Activated B cell treated with CpG ODN at 0.5 μM for 24 hours (primary cell): ENCODE measurements at regions of chrX and their contacts with region 1.

Region 1: GRCh38 chrX:43557792-43558191 is 98.3 kb upstream of the MAOA start:
- DNase-seq: peak; percentile 18
- ATAC-seq: peak; percentile 42
- H3K4me3 Mint-ChIP-seq: no peak overlapping the region
- H3K27ac Mint-ChIP-seq: no peak overlapping the region
- H3K4me1 Mint-ChIP-seq: peaks cover 13% of the 10 kb centered on the region
- H3K27me3 Mint-ChIP-seq: no peaks in the 10 kb centered on the region
- CTCF ChIP-seq: no peak

Region 2: DNA sequence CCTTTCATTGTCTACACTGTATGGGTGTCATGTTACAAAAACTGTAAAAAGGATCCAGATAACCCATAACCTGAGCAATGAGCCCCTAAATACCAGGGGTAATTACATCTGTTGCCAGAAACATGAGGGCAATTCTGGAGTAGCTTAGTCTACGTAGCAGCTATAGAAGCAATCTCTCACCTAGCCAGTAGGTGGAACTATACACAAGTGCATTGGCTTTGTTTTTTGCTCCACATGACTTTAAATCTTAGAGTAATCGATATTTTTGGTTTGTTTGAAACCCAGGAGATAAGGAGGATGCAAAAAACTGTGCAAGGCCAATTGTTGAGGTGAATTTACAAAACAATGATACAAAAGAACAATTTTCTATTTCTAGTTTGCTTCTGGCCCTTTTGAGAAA is 1776.3 kb before region 1 on chrX:
- CTCF ChIA-PET with region 1: interaction called, 21 read pairs
- POLR2A ChIA-PET with region 1: no interaction called
- intact Hi-C with region 1: loop called (anchors 1 kb)
- DNase-seq: no peak
- ATAC-seq: peak; percentile 21
- H3K4me3 Mint-ChIP-seq: no peak overlapping the region
- H3K27ac Mint-ChIP-seq: no peak overlapping the region
- H3K4me1 Mint-ChIP-seq: peaks cover 9% of the 10 kb centered on the region
- H3K27me3 Mint-ChIP-seq: no peaks in the 10 kb centered on the region
- CTCF ChIP-seq: peak; percentile 55

Region 3: DNA sequence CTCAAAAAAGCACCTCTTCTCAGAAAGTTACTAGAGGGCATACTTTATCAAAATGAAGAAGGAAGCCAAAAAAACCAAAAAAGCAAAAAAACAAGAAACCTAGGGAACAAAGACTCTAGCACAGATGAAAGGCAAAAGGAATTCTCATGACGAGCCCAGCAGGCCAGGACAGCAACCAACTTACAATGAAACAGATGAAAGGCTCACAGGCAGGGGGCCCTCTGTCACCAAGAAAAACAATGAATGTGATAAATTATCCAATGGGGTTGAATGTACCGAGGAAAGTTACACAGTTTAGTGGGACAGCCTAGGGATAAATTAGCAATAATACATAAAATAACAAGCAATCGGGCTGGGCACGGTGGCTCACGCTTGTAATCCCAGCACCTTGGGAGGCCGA is 1754.8 kb before region 1 on chrX:
- CTCF ChIA-PET with region 1: interaction called, 35 read pairs
- POLR2A ChIA-PET with region 1: no interaction called
- intact Hi-C with region 1: loop called (anchors 1 kb)
- DNase-seq: no peak
- ATAC-seq: no peak
- H3K4me3 Mint-ChIP-seq: no peak overlapping the region
- H3K27ac Mint-ChIP-seq: no peak overlapping the region
- H3K4me1 Mint-ChIP-seq: peaks cover 32% of the 10 kb centered on the region
- H3K27me3 Mint-ChIP-seq: no peaks in the 10 kb centered on the region
- CTCF ChIP-seq: no peak

Region 4: DNA sequence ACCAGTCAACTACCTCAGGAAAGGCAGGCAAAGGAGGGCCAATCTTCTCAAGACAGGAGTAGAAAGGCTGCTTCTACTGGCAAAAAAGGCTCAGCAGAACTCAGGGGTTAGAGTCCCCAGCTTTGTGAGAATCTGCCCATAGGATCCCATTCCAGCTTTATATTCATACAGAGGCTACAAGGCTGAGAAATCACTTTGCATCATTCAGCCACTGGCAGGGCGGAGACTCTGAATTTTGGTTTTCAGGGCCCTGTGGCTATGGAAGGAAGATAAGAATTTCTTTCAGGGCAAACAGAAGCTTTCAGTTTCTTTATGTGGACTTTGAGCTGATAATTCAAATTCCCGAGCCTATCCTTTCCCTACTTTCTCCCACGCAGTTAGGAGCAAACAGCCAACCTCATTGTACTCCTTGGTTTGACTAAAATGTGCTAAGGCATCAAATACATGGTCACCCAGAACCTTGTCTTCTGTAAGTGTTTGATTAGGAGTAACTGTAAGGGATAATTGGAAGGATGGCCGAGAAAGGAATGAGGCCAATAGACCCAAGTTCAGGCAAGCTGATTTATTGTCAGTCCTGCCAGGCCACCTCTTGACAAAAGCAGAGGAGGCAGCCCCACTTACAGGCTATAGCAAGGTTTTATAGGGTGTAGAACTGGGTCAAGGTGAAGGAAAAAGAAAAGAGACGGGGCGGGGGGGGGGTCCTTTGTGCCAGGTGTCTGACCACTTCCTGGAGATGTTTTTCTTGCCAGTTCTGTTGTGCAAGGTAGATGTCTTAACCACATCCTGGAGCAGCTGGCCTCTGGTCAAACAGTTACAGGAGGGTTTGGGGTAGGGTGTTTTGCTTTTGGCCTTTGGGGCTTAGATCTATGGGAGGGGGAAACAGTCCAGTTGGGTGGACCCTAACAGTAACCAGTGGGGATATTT is 614.5 kb before region 1 on chrX:
- CTCF ChIA-PET with region 1: no interaction called
- POLR2A ChIA-PET with region 1: no interaction called
- intact Hi-C with region 1: loop called (anchors 10 kb)
- DNase-seq: no peak
- ATAC-seq: peak; percentile 66
- H3K4me3 Mint-ChIP-seq: peak overlapping the region; percentile 50
- H3K27ac Mint-ChIP-seq: peak overlapping the region; percentile 93
- H3K4me1 Mint-ChIP-seq: peaks cover 78% of the 10 kb centered on the region
- H3K27me3 Mint-ChIP-seq: no peaks in the 10 kb centered on the region
- CTCF ChIP-seq: no peak

Region 5: GRCh38 chrX:43467608-43468239 is 90.1 kb before region 1 on chrX:
- CTCF ChIA-PET with region 1: no interaction called
- POLR2A ChIA-PET with region 1: no interaction called
- intact Hi-C with region 1: no loop called
- DNase-seq: no peak
- ATAC-seq: no peak
- H3K4me3 Mint-ChIP-seq: no peak overlapping the region
- H3K27ac Mint-ChIP-seq: no peak overlapping the region
- H3K4me1 Mint-ChIP-seq: peaks cover 3% of the 10 kb centered on the region
- H3K27me3 Mint-ChIP-seq: no peaks in the 10 kb centered on the region
- CTCF ChIP-seq: no peak

Region 6: DNA sequence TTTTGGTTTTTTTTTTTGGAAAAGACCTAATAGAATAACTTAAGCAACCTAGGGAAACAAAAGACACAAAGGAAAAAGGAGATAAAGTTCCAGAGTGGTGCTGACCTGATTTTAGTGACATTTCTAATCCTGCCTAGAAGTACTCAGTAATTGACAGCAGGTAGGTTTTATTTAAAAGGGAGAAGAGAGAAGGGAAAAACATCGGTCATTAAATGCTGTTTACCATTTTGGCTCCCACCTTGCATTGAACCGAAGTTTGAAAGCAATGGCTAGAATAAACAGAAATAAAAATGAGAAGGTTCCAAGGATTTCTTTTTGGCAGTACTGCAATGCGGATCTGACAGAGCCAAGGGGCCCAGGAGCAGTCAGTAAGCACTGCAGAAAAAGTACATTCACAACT is 17.5 kb before region 1 on chrX:
- CTCF ChIA-PET with region 1: no interaction called
- POLR2A ChIA-PET with region 1: no interaction called
- intact Hi-C with region 1: no loop called
- DNase-seq: no peak
- ATAC-seq: no peak
- H3K4me3 Mint-ChIP-seq: no peak overlapping the region
- H3K27ac Mint-ChIP-seq: no peak overlapping the region
- H3K4me1 Mint-ChIP-seq: peaks cover 6% of the 10 kb centered on the region
- H3K27me3 Mint-ChIP-seq: no peaks in the 10 kb centered on the region
- CTCF ChIP-seq: no peak

Region 7: DNA sequence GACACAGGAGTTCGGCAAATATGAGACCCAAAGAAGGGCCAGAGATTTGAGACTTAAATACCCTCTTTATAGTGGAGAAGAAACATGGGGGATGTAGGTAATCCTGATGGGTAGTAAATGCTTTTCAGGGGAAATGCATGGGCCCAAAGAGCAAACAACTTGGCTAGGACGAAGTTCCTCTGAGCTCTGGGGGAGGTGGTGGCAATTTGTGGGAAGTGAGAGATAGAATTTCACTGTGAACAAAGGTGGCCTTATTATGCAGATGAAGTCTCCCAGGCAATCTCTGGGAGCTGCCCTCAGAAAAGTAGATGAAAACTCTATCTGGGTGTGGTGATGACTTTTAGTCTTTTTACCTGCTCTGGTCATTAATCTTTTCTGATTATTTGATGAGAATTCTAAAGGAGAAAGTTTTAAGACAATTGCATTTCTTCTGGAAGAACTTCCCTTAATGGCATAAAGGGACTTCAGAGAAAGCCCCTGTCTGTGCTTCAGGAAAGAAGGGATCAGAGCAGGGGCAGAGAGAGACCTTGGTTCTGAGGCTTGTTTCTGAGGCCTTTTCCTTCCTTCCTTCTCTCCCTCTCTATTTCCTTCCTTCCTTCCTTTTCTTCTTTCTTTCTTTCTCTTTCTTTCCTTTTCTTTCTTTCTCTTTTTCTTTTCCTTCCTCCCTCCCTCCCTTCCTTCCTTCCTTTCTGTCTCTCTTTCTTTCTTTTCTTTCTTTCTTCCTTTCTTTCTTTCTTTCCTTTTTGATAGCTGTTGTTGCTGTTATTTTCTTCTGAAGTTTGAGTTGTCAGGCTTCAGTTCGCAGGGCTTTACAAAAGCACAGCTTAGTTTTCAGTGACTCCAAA is 60.8 kb after region 1 on chrX:
- CTCF ChIA-PET with region 1: no interaction called
- POLR2A ChIA-PET with region 1: no interaction called
- intact Hi-C with region 1: loop called (anchors 10 kb)
- DNase-seq: no peak
- ATAC-seq: no peak
- H3K4me3 Mint-ChIP-seq: no peak overlapping the region
- H3K27ac Mint-ChIP-seq: no peak overlapping the region
- H3K4me1 Mint-ChIP-seq: no peaks in the 10 kb centered on the region
- H3K27me3 Mint-ChIP-seq: peaks cover 5% of the 10 kb centered on the region
- CTCF ChIP-seq: no peak

Region 8: GRCh38 chrX:43882299-43882694 is 324.5 kb after region 1 on chrX and contains the start of gene MAOB:
- CTCF ChIA-PET with region 1: no interaction called
- POLR2A ChIA-PET with region 1: no interaction called
- intact Hi-C with region 1: no loop called
- DNase-seq: no peak
- ATAC-seq: no peak
- H3K4me3 Mint-ChIP-seq: no peak within 1 kb of the TSS
- H3K27ac Mint-ChIP-seq: no peak within 1 kb of the TSS
- H3K4me1 Mint-ChIP-seq: no peaks in the 10 kb centered on the region
- H3K27me3 Mint-ChIP-seq: peaks cover 10% of the 10 kb centered on the region
- CTCF ChIP-seq: no peak
- total RNA-seq, gene MAOB: not detected in 2 replicates